IMR-90 (cell line): ENCODE measurements at regions of chr20 and their contacts with region 1.

Region 1: GRCh38 chr20:58515233-58516184 is at the start of gene APCDD1L:
- DNase-seq: peak; percentile 69
- ATAC-seq: peak; percentile 85
- H3K4me3 ChIP-seq: peak within 1 kb of the TSS; percentile 58
- H3K27ac ChIP-seq: peak within 1 kb of the TSS; percentile 27; the same call in 1 of the 2 replicates
- H3K4me1 ChIP-seq: peaks cover 11% of the 10 kb centered on the region
- H3K27me3 ChIP-seq: peaks cover 16% of the 10 kb centered on the region; the same call in 1 of the 2 replicates
- CTCF ChIP-seq: no peak
- POLR2A ChIP-seq: no peak
- RAD21 ChIP-seq: peak; percentile 13; the same call in 1 of the 2 replicates
- total RNA-seq, gene APCDD1L: 2.2 and 2.5 TPM in 2 replicates

Region 2: GRCh38 chr20:58528412-58528811 is 12.9 kb after region 1 on chr20:
- CTCF ChIA-PET with region 1: no interaction called
- POLR2A ChIA-PET with region 1: no interaction called
- dilution Hi-C with region 1: no loop called
- in situ Hi-C with region 1: no loop called
- intact Hi-C with region 1: no loop called
- DNase-seq: no peak
- ATAC-seq: no peak
- H3K4me3 ChIP-seq: no peak overlapping the region
- H3K27ac ChIP-seq: no peak overlapping the region
- H3K4me1 ChIP-seq: peaks cover 13% of the 10 kb centered on the region
- H3K27me3 ChIP-seq: no peaks in the 10 kb centered on the region
- CTCF ChIP-seq: no peak
- POLR2A ChIP-seq: no peak
- RAD21 ChIP-seq: no peak

Region 3: DNA sequence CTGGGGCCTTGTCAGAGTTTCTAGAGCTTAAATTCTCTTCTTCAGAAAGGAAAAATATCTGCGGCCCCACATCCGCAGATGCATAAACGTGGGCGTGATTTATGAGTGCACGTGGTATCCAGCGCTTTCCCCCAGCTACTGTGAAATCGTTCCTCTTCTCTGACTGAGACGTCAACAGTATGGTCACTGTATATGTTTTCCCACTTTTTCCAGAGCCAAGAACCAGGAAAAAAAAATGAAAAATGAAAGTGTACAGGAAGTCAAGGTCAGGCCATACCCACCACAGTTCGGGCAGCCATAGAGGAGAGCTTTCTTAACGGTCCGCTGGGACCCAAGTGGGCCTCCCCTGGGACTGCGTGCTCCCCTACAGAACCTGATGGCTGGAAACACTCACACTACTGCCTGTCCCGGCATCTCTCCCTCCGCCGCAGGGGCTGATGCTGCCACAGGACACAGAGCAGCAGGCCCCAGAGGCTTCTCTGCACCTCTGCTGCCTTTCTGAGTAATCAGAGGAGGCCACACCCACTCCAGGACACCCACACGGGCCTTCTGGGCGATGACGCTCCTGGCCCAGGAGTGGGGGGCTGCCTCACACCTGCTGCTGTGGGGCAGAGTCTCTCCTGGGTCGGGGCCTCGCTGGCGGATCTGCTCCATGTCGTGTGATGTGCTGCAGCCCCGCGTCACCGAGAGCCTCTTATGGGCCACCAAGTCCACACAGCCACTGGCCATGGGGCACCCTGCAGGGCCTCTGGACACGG is 119.2 kb after region 1 on chr20:
- CTCF ChIA-PET with region 1: no interaction called
- POLR2A ChIA-PET with region 1: no interaction called
- dilution Hi-C with region 1: no loop called
- in situ Hi-C with region 1: no loop called
- intact Hi-C with region 1: loop called (anchors 5 kb)
- DNase-seq: peak; percentile 92
- ATAC-seq: peak; percentile 73
- H3K4me3 ChIP-seq: no peak overlapping the region
- H3K27ac ChIP-seq: peak overlapping the region; percentile 36
- H3K4me1 ChIP-seq: peaks cover 16% of the 10 kb centered on the region
- H3K27me3 ChIP-seq: no peaks in the 10 kb centered on the region
- CTCF ChIP-seq: no peak
- POLR2A ChIP-seq: peak; percentile 33
- RAD21 ChIP-seq: 0 out of 2 replicates have a peak, but pooled peaks have one; percentile 15